MCF 10A (cell line): ENCODE measurements at regions of chr19 and their contacts with region 1.

Region 1: GRCh38 chr19:40633207-40633606 is 32.0 kb downstream of the LTBP4 start:
- DNase-seq: no peak
- H3K4me3 Mint-ChIP-seq: no peak overlapping the region
- H3K27ac Mint-ChIP-seq: no peak overlapping the region
- H3K4me1 Mint-ChIP-seq: peaks cover 6% of the 10 kb centered on the region
- H3K27me3 Mint-ChIP-seq: no peaks in the 10 kb centered on the region
- CTCF ChIP-seq: no peak

Region 2: GRCh38 chr19:40603389-40604135 is 29.6 kb before region 1 on chr19:
- CTCF ChIA-PET with region 1: interaction called, 18 read pairs
- POLR2A ChIA-PET with region 1: interaction called, 15 read pairs
- intact Hi-C with region 1: loop called (anchors 1 kb)
- DNase-seq: peak; percentile 99
- H3K4me3 Mint-ChIP-seq: peak overlapping the region; percentile 79
- H3K27ac Mint-ChIP-seq: peak overlapping the region; percentile 69
- H3K4me1 Mint-ChIP-seq: peaks cover 47% of the 10 kb centered on the region
- H3K27me3 Mint-ChIP-seq: no peaks in the 10 kb centered on the region
- CTCF ChIP-seq: no peak

Region 3: DNA sequence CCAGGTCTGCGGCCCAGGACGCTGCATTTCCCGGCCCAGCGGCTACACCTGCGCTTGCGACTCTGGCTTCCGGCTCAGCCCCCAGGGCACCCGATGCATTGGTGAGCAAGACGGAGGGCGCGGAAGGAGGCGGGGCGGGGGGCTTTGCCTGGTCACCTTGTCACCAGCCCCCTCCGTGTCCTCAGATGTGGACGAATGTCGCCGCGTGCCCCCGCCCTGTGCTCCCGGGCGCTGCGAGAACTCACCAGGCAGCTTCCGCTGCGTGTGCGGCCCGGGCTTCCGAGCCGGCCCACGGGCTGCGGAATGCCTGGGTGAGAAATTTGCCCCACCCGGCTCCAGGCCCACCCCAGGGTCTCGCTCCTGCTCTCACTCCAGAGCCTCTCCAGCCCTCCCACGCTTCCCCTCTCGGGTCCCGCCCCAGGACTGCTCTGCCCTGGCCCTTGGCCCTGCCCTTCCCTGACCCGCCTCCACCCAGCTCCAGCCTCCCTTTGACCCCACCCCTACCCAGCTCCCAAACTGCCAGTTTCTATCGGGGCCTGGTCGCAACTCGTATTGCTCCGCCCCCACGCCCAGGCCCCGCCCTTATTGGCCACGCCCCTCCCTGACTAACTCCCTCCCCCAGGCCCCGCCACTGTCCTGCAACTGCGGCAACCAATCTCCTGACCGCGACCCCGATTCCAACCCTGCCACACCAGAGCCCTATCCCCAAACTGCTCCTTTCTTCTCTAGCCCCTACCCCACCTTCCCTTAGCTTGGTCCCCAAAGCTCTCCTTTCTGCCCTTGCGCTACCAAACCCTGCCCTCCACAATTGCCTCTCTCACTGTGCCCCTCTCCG is 23.4 kb before region 1 on chr19:
- CTCF ChIA-PET with region 1: interaction called, 37 read pairs
- POLR2A ChIA-PET with region 1: interaction called, 15 read pairs
- intact Hi-C with region 1: loop called (anchors 1 kb)
- DNase-seq: peak; percentile 97
- H3K4me3 Mint-ChIP-seq: peak overlapping the region; percentile 74
- H3K27ac Mint-ChIP-seq: peak overlapping the region; percentile 39
- H3K4me1 Mint-ChIP-seq: peaks cover 39% of the 10 kb centered on the region
- H3K27me3 Mint-ChIP-seq: no peaks in the 10 kb centered on the region
- CTCF ChIP-seq: no peak

Region 4: GRCh38 chr19:40650749-40651305 is 17.6 kb after region 1 on chr19:
- CTCF ChIA-PET with region 1: interaction called, 60 read pairs
- POLR2A ChIA-PET with region 1: interaction called, 3 read pairs
- intact Hi-C with region 1: no loop called
- DNase-seq: no peak
- H3K4me3 Mint-ChIP-seq: no peak overlapping the region
- H3K27ac Mint-ChIP-seq: no peak overlapping the region
- H3K4me1 Mint-ChIP-seq: peaks cover 25% of the 10 kb centered on the region
- H3K27me3 Mint-ChIP-seq: no peaks in the 10 kb centered on the region
- CTCF ChIP-seq: no peak

Region 5: DNA sequence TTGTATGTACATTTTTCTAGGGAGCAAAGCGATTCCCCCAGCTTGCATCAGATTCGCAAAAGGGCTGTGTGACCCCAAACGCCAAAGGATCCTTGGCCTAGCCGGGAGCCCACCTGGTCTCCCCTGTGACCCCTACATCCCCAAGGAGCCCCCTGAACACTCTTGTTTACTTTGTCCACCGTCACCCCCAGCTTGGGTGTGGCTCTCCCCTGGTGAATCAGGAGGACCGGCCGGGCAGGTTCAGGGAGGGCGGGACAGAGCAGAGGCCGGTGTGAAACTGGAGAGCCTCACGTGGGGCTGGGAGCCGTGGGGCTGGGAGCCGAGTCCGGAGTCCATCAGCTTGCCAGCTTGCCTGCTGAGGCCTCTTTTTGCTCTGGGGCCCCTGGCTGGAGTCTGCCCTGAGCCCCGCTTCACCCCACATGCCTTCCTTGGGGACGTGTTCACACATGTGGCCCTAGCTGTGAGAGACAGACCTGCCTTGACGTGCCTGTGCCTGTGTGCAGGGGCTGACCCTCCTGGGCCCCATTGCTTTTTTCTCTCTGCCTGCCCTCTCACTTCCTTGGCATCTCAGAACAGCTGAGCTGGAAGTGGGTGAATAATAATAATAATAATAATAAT is 85.7 kb after region 1 on chr19:
- CTCF ChIA-PET with region 1: no interaction called
- POLR2A ChIA-PET with region 1: no interaction called
- intact Hi-C with region 1: no loop called
- DNase-seq: peak; percentile 92
- H3K4me3 Mint-ChIP-seq: peak overlapping the region; percentile 92
- H3K27ac Mint-ChIP-seq: peak overlapping the region; percentile 95
- H3K4me1 Mint-ChIP-seq: peaks cover 47% of the 10 kb centered on the region
- H3K27me3 Mint-ChIP-seq: no peaks in the 10 kb centered on the region
- CTCF ChIP-seq: no peak